ENCODE measurements at regions of chr14 and their contacts with region 1.

Region 1: GRCh38 chr14:97724265-97724731 is 927.1 kb downstream of the VRK1 start:
- DNase-seq: peak; percentile 49 to 56 (median 53)
- H3K4me3 ChIP-seq: peak overlapping the region; percentile 0 to 45
- H3K4me3 Mint-ChIP-seq: peak overlapping the region; percentile 78 to 92 (median 85)
- H3K27ac ChIP-seq: peak overlapping the region; percentile 55
- H3K27ac Mint-ChIP-seq: peak overlapping the region; percentile 89 to 98 (median 94)
- H3K4me1 ChIP-seq: peaks cover 57% of the 10 kb centered on the region
- H3K4me1 Mint-ChIP-seq: peaks cover 57 to 76% (median 66%) of the 10 kb centered on the region in 4 donors
- H3K27me3 ChIP-seq: no peaks in the 10 kb centered on the region
- H3K27me3 Mint-ChIP-seq: no peaks in the 10 kb centered on the region

Region 2: DNA sequence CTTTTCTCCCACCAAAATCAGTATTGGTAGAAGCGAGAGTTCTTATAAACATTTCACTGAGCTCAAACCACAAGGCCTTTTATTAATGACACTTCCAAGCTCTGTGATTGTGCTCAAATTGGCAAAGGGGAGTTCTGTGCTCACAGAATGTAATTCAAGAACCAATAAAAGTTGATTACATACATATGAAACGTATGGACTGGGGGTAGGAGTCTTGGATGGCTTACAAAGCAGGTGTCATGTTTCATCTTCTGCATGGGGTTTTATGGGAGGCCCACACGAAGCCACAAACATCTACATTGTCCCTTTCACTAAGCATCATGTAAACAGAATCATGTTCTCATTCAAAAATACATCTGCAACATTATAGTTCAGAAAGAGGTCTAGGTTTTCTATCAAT is 98.8 kb before region 1 on chr14:
- CTCF ChIA-PET with region 1: interaction called, 10 read pairs
- POLR2A ChIA-PET with region 1: interaction called, 6 read pairs
- intact Hi-C with region 1: no loop called
- DNase-seq: no peak
- H3K4me3 ChIP-seq: no peak overlapping the region
- H3K4me3 Mint-ChIP-seq: no peak overlapping the region
- H3K27ac ChIP-seq: no peak overlapping the region
- H3K27ac Mint-ChIP-seq: peak overlapping the region in 2 of 7 donors; percentile 18 to 26
- H3K4me1 ChIP-seq: peaks cover 11% of the 10 kb centered on the region
- H3K4me1 Mint-ChIP-seq: peaks cover 11 to 33% (median 16%) of the 10 kb centered on the region in 4 donors
- H3K27me3 ChIP-seq: no peaks in the 10 kb centered on the region
- H3K27me3 Mint-ChIP-seq: no peaks in the 10 kb centered on the region

Region 3: DNA sequence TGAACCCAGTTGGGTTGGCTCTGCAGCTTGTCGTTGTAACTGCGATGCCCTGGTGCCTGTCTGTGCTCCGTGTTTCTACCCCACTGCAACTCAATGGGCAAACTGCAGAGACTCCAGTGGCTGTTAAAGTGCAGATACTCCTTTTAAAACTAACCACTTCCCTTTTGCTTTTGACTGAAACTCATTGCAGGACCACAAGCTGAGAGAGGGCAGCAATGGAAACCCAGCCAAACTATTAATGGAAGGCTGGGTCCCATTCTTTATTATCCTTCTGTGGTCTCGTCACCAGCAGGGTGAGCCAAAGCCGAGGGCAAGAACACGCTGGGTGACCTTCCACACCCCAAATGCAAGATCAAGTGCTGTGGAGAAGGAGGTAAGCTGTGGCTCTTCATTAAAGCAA is 16.7 kb before region 1 on chr14:
- CTCF ChIA-PET with region 1: interaction called, 14 read pairs
- POLR2A ChIA-PET with region 1: interaction called, 66 read pairs
- intact Hi-C with region 1: loop called (anchors 2 kb)
- DNase-seq: peak; percentile 24 to 36 (median 28)
- H3K4me3 ChIP-seq: no peak overlapping the region
- H3K4me3 Mint-ChIP-seq: peak overlapping the region in 7 of 8 donors; percentile 25 to 88 (median 68)
- H3K27ac ChIP-seq: no peak overlapping the region
- H3K27ac Mint-ChIP-seq: peak overlapping the region; percentile 5 to 85 (median 74)
- H3K4me1 ChIP-seq: peaks cover 84% of the 10 kb centered on the region
- H3K4me1 Mint-ChIP-seq: peaks cover 79 to 100% (median 90%) of the 10 kb centered on the region in 4 donors
- H3K27me3 ChIP-seq: no peaks in the 10 kb centered on the region
- H3K27me3 Mint-ChIP-seq: no peaks in the 10 kb centered on the region